ENCODE measurements at regions of chr1 and their contacts with region 1.

Region 1: GRCh38 chr1:86499987-86500593 is 31.4 kb downstream of the CLCA1 start:
- DNase-seq: peak; percentile 28
- H3K4me3 Mint-ChIP-seq: no peak overlapping the region
- H3K27ac Mint-ChIP-seq: no peak overlapping the region
- H3K4me1 Mint-ChIP-seq: no peaks in the 10 kb centered on the region
- H3K27me3 Mint-ChIP-seq: peaks cover 11% of the 10 kb centered on the region
- CTCF ChIP-seq: peak; percentile 84

Region 2: DNA sequence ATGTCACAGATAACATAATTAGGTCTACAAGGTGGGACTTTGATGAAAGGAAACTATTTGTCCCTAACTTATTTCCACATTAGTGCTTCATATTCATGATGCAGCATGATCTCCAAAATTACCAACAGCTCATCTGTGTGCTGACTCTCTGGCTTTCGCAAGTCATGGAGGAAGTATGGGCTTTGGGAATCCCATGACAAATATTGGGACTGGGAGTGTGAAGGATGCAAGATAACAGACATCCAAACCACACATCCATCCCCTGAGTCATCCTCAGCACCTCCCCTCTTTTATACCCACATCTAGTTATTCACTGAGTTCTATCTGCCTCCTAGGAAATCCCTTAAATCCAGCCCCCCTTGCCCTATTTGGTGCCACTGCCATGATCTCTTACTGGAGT is 240.7 kb before region 1 on chr1:
- CTCF ChIA-PET with region 1: no interaction called
- POLR2A ChIA-PET with region 1: no interaction called
- intact Hi-C with region 1: no loop called
- DNase-seq: peak; percentile 7
- H3K4me3 Mint-ChIP-seq: no peak overlapping the region
- H3K27ac Mint-ChIP-seq: no peak overlapping the region
- H3K4me1 Mint-ChIP-seq: no peaks in the 10 kb centered on the region
- H3K27me3 Mint-ChIP-seq: no peaks in the 10 kb centered on the region
- CTCF ChIP-seq: no peak

Region 3: DNA sequence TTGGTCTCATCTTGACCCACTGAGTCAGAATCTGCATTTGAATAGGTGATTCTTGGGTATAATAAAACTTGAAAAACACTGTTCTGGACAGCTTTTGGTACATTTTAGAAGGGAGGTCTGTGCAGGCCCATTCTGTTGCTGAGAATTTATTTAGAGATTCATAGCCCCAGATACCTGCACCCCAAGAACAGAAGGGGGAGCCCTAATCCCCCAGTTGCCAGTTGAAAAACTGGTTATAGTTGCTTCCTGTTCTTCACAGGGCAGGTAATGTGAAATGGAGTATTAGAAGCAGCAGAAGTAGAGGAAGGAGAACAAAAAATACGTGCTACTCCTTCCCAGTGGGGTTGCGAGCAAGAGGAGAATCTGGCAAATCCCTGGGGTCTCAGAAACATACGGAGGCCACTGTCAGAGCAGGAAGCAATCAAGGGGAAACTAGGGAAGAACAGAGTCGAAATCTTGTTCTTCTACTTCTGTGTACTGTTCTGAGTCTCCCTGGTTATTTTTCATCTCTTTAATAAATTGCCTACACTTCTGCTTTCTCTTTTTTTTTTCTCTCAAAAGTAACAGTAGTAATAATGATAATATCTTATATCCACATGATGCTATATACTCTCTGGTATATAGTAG is 80.7 kb before region 1 on chr1:
- CTCF ChIA-PET with region 1: interaction called, 20 read pairs
- POLR2A ChIA-PET with region 1: interaction called, 5 read pairs
- intact Hi-C with region 1: loop called (anchors 1 kb)
- DNase-seq: peak; percentile 73
- H3K4me3 Mint-ChIP-seq: no peak overlapping the region
- H3K27ac Mint-ChIP-seq: peak overlapping the region; percentile 52
- H3K4me1 Mint-ChIP-seq: peaks cover 30% of the 10 kb centered on the region
- H3K27me3 Mint-ChIP-seq: no peaks in the 10 kb centered on the region
- CTCF ChIP-seq: peak; percentile 58

Region 4: DNA sequence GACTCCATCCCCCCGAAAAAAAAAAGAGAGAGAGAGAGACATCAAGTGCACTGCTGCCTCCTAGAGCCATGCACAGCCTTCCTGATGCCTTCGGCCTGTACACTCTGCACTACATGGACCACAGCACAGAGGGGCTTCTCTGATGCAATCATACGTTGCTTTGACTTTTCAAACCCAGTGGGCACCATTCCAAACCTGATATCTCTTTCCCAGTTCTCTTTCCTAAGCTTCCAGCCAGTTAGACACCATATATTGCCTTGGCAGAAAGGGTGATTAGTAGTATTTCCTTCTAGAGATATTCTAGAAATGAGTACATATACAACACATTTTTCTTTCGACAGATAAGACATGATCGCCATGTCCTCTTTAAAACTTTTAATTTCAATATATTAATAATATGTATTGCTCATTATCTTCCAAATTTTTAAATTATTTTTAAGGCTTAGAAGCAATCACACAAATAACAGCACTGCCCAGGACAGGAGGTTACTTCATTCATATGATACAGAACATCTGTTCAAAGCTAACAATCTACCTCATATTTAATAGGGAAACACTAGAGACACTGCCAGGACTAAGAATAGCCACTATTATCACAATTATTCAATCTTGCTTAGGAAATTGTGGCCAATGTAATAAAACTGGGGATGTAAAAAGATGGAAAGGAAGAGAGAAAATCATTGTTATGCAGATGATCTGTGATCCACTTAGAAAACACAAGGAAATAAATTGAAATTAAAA is 21.5 kb before region 1 on chr1:
- CTCF ChIA-PET with region 1: interaction called, 77 read pairs
- POLR2A ChIA-PET with region 1: no interaction called
- intact Hi-C with region 1: no loop called
- DNase-seq: no peak
- H3K4me3 Mint-ChIP-seq: no peak overlapping the region
- H3K27ac Mint-ChIP-seq: no peak overlapping the region
- H3K4me1 Mint-ChIP-seq: no peaks in the 10 kb centered on the region
- H3K27me3 Mint-ChIP-seq: no peaks in the 10 kb centered on the region
- CTCF ChIP-seq: no peak

Region 5: GRCh38 chr1:86515597-86515996 is 15.5 kb after region 1 on chr1:
- CTCF ChIA-PET with region 1: interaction called, 39 read pairs
- POLR2A ChIA-PET with region 1: no interaction called
- intact Hi-C with region 1: no loop called
- DNase-seq: peak; percentile 64
- H3K4me3 Mint-ChIP-seq: no peak overlapping the region
- H3K27ac Mint-ChIP-seq: no peak overlapping the region
- H3K4me1 Mint-ChIP-seq: peaks cover 9% of the 10 kb centered on the region
- H3K27me3 Mint-ChIP-seq: no peaks in the 10 kb centered on the region
- CTCF ChIP-seq: peak; percentile 39

Region 6: GRCh38 chr1:86687595-86687994 is 187.5 kb after region 1 on chr1:
- CTCF ChIA-PET with region 1: interaction called, 25 read pairs
- POLR2A ChIA-PET with region 1: interaction called, 3 read pairs
- intact Hi-C with region 1: loop called (anchors 10 kb)
- DNase-seq: peak; percentile 16
- H3K4me3 Mint-ChIP-seq: no peak overlapping the region
- H3K27ac Mint-ChIP-seq: no peak overlapping the region
- H3K4me1 Mint-ChIP-seq: no peaks in the 10 kb centered on the region
- H3K27me3 Mint-ChIP-seq: no peaks in the 10 kb centered on the region
- CTCF ChIP-seq: peak; percentile 39

Region 7: DNA sequence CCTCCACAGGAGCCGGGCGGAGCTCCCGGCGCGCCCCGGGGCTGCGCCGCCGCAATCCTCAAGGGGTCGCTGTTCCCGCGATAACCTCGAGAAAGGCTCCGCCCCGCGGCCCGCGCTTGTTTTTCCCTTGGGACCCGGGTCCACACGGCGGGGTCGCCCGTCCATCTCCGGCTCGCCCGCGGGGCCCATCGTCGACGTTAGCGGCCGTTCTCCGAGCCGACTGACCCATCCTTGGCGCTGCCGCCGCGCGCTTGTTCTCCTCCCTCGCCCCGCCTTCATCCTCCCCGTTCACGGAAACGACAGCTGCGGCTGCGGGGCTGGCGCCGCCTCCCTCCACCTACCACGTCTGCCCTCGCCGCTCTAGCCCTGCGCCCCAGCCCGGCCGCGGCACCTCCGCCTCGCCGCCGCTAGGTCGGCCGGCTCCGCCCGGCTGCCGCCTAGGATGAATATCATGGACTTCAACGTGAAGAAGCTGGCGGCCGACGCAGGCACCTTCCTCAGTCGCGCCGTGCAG is 204.4 kb after region 1 on chr1 and contains the start of gene SH3GLB1:
- CTCF ChIA-PET with region 1: interaction called, 11 read pairs
- POLR2A ChIA-PET with region 1: interaction called, 10 read pairs
- intact Hi-C with region 1: no loop called
- DNase-seq: peak; percentile 90
- H3K4me3 Mint-ChIP-seq: peak within 1 kb of the TSS; percentile 97
- H3K27ac Mint-ChIP-seq: peak within 1 kb of the TSS; percentile 99
- H3K4me1 Mint-ChIP-seq: peaks cover 35% of the 10 kb centered on the region
- H3K27me3 Mint-ChIP-seq: no peaks in the 10 kb centered on the region
- CTCF ChIP-seq: peak; percentile 85
- total RNA-seq, gene SH3GLB1: 108 and 123 TPM in 2 replicates